ENCODE measurements at regions of chr1 and their contacts with region 1.

Region 1: GRCh38 chr1:186307445-186307844 is 67.6 kb downstream of the TPR start:
- DNase-seq: no peak
- ATAC-seq: no peak
- H3K4me3 ChIP-seq: no peak overlapping the region
- H3K4me3 Mint-ChIP-seq: no peak overlapping the region
- H3K27ac ChIP-seq: no peak overlapping the region
- H3K27ac Mint-ChIP-seq: no peak overlapping the region
- H3K4me1 ChIP-seq: peaks cover 34 to 54% of the 10 kb centered on the region in 2 experiments
- H3K4me1 Mint-ChIP-seq: peaks cover 40 to 44% (median 43%) of the 10 kb centered on the region in 3 donors
- H3K27me3 ChIP-seq: no peaks in the 10 kb centered on the region
- H3K27me3 Mint-ChIP-seq: no peaks in the 10 kb centered on the region

Region 2: GRCh38 chr1:185813401-185813979 is 494.0 kb before region 1 on chr1:
- CTCF ChIA-PET with region 1: no interaction called
- POLR2A ChIA-PET with region 1: no interaction called
- DNase-seq: peak in 1 of 35 experiments; percentile 32
- ATAC-seq: no peak
- H3K4me3 ChIP-seq: no peak overlapping the region
- H3K4me3 Mint-ChIP-seq: no peak overlapping the region
- H3K27ac ChIP-seq: no peak overlapping the region
- H3K27ac Mint-ChIP-seq: no peak overlapping the region
- H3K4me1 ChIP-seq: no peaks in the 10 kb centered on the region
- H3K4me1 Mint-ChIP-seq: no peaks in the 10 kb centered on the region
- H3K27me3 ChIP-seq: peaks cover 0 to 2% of the 10 kb centered on the region in 2 experiments
- H3K27me3 Mint-ChIP-seq: peaks cover 3 to 12% of the 10 kb centered on the region in 2 donors

Region 3: GRCh38 chr1:186325239-186325638 is 17.8 kb after region 1 on chr1:
- CTCF ChIA-PET with region 1: interaction called, 5 to 7 read pairs
- POLR2A ChIA-PET with region 1: interaction called, 3 to 10 read pairs
- DNase-seq: peak in 1 of 35 experiments; percentile 54
- ATAC-seq: peak in 2 of 4 experiments; percentile 52 to 54
- H3K4me3 ChIP-seq: no peak overlapping the region
- H3K4me3 Mint-ChIP-seq: no peak overlapping the region
- H3K27ac ChIP-seq: no peak overlapping the region
- H3K27ac Mint-ChIP-seq: peak overlapping the region in 1 of 2 donors; percentile 45
- H3K4me1 ChIP-seq: peaks cover 0 to 8% of the 10 kb centered on the region in 2 experiments
- H3K4me1 Mint-ChIP-seq: peaks cover 31 to 38% (median 32%) of the 10 kb centered on the region in 3 donors
- H3K27me3 ChIP-seq: no peaks in the 10 kb centered on the region
- H3K27me3 Mint-ChIP-seq: no peaks in the 10 kb centered on the region

Region 4: DNA sequence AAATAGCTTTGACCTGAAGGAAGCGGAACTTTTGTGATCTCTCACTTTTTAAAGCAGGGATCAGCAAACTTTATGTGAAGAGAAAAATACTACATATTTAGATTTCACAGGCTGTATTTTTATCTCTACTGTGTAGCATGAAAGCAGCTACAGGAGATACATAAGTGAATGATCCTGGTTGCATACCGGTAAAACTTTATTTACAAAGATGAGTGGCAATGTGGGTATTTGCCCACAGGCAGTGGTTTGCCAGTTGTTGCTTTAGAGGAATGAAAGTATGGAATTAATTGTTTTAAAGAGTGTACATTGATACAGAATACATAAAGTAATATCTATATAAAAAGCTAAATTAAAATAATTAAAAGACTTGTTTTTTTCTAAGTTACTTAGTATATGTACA is 86.0 kb after region 1 on chr1:
- CTCF ChIA-PET with region 1: no interaction called
- POLR2A ChIA-PET with region 1: no interaction called
- DNase-seq: no peak
- ATAC-seq: no peak
- H3K4me3 ChIP-seq: no peak overlapping the region
- H3K4me3 Mint-ChIP-seq: no peak overlapping the region
- H3K27ac ChIP-seq: no peak overlapping the region
- H3K27ac Mint-ChIP-seq: no peak overlapping the region
- H3K4me1 ChIP-seq: no peaks in the 10 kb centered on the region
- H3K4me1 Mint-ChIP-seq: peaks cover 0 to 6% (median 0%) of the 10 kb centered on the region in 3 donors
- H3K27me3 ChIP-seq: no peaks in the 10 kb centered on the region
- H3K27me3 Mint-ChIP-seq: no peaks in the 10 kb centered on the region

Region 5: DNA sequence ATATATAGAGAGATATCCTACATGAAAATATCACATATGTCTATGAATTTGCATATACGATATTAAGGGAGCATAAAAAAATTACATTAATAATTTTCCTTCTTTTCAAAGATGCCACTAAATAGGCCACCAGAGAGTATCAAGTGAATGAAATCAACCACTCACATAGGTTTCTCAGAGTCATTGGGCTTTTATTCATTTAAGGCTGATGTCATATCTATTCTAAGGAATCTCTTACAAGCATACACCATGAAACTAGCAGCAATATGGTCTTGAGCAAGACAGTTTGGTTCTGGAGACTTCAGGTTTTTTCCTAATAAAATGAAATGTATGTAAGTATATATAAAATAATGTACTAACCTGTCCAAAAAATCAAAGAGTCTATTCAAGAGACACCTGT is 941.8 kb after region 1 on chr1:
- CTCF ChIA-PET with region 1: no interaction called
- POLR2A ChIA-PET with region 1: no interaction called
- DNase-seq: no peak
- ATAC-seq: no peak
- H3K4me3 ChIP-seq: no peak overlapping the region
- H3K4me3 Mint-ChIP-seq: no peak overlapping the region
- H3K27ac ChIP-seq: no peak overlapping the region
- H3K27ac Mint-ChIP-seq: no peak overlapping the region
- H3K4me1 ChIP-seq: no peaks in the 10 kb centered on the region
- H3K4me1 Mint-ChIP-seq: no peaks in the 10 kb centered on the region
- H3K27me3 ChIP-seq: no peaks in the 10 kb centered on the region
- H3K27me3 Mint-ChIP-seq: no peaks in the 10 kb centered on the region

Measured in T-cell (primary cell).